Sigmoid colon (tissue), 7 donors: ENCODE measurements at regions of chr2 and their contacts with region 1.

Region 1: GRCh38 chr2:205680067-205680466 is 2.2 kb upstream of the NRP2 start:
- DNase-seq: peak; percentile 77
- H3K4me3 ChIP-seq: no peak overlapping the region
- H3K27ac ChIP-seq: peak overlapping the region in 3 of 4 donors; percentile 94 to 99 (median 96)
- H3K4me1 ChIP-seq: peaks cover 0 to 26% (median 23%) of the 10 kb centered on the region in 4 donors
- H3K27me3 ChIP-seq: no peaks in the 10 kb centered on the region
- CTCF ChIP-seq: peak; percentile 34 to 76 (median 56)
- EP300 ChIP-seq: no peak
- POLR2A ChIP-seq: no peak

Region 2: DNA sequence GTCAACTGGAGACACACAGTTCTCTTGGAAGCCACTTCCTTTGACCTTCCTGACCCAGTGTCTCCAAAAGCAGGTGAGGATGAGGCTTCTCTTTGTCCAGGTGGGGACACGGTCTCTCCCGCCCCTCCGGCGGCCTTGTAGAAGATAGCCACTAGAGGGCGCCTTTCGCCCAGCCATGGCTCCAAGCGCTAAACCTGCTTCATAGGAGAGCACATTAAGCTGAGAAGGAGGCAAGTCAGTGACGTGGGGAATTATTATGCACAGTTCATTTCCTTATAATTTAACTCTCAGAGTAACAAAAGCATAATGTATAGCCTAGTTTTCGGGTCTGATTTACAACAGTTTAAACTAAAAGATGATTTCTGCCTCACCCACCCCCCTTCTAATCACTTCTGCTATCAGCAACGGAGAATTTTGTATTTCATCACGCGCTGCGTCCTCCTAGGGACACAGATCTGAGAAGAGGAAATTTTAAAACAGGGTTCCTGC is 1534.8 kb before region 1 on chr2:
- intact Hi-C with region 1: loop called (anchors 2 kb)
- DNase-seq: peak; percentile 88
- H3K4me3 ChIP-seq: peak overlapping the region; percentile 18 to 41 (median 34)
- H3K27ac ChIP-seq: peak overlapping the region in 3 of 4 donors; percentile 20 to 35 (median 24)
- H3K4me1 ChIP-seq: no peaks in the 10 kb centered on the region
- H3K27me3 ChIP-seq: no peaks in the 10 kb centered on the region
- CTCF ChIP-seq: peak; percentile 77 to 95 (median 83)
- EP300 ChIP-seq: no peak
- POLR2A ChIP-seq: no peak

Region 3: GRCh38 chr2:204325468-204325867 is 1354.6 kb before region 1 on chr2:
- intact Hi-C with region 1: loop called (anchors 2 kb)
- DNase-seq: peak; percentile 87
- H3K4me3 ChIP-seq: no peak overlapping the region
- H3K27ac ChIP-seq: no peak overlapping the region
- H3K4me1 ChIP-seq: peaks cover 0 to 21% (median 0%) of the 10 kb centered on the region in 4 donors
- H3K27me3 ChIP-seq: no peaks in the 10 kb centered on the region
- CTCF ChIP-seq: peak; percentile 82 to 93 (median 88)
- EP300 ChIP-seq: no peak
- POLR2A ChIP-seq: no peak

Region 4: DNA sequence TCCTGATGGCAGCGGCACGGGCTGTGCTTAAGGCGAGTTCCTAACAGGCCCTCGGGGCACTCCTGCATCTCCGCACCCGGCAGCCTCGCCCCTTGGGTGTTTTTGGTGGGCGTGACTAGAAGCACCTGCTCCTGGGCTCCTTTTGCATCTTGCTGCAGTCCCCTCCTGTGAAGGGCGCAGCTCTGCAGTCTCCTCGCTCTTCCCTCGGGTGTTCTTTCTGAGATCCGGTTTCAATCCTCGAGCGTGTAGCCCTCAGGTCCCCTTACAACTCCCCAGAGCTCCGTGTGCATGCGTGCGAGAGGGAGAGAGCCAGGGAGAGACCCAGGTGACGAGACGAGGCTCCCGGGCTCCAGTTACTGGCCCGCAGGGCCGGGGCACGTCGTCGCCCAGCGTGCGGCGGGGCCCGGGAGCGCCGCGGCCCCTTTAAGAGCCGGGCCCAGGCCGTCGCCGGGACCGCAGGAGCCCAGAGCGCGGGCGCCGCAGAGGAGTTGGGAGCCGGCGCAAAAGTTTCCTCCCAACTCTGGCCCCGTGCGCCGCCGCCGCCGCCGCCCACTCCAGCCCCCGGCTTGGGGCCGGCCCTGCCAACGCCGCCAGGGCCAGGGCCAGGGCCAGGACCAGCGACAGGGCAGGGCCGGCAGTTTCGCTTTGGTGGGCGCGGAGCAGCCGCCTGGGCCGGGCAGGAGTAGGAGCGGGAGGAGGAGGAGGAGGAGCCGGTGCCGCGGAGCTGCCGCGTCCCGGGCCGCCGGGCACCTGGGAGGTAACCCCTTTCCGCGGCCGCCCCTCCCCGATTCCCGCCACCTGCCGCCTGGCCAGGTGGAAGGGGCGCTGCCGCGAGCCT is 1134.8 kb before region 1 on chr2 and contains the start of gene PARD3B:
- intact Hi-C with region 1: loop called (anchors 10 kb)
- DNase-seq: peak; percentile 78
- H3K4me3 ChIP-seq: peak within 1 kb of the TSS; percentile 93 to 99 (median 96)
- H3K27ac ChIP-seq: peak within 1 kb of the TSS; percentile 93 to 95 (median 94)
- H3K4me1 ChIP-seq: peaks cover 0 to 46% (median 33%) of the 10 kb centered on the region in 4 donors
- H3K27me3 ChIP-seq: no peaks in the 10 kb centered on the region
- CTCF ChIP-seq: no peak
- EP300 ChIP-seq: no peak
- POLR2A ChIP-seq: no peak
- total RNA-seq, gene PARD3B: 42.5 to 64.0 (median 52.7) TPM

Region 5: GRCh38 chr2:204860274-204860673 is 819.8 kb before region 1 on chr2:
- intact Hi-C with region 1: loop called (anchors 5 kb)
- DNase-seq: peak; percentile 80
- H3K4me3 ChIP-seq: no peak overlapping the region
- H3K27ac ChIP-seq: peak overlapping the region in 3 of 4 donors; percentile 35 to 69 (median 60)
- H3K4me1 ChIP-seq: peaks cover 0 to 34% (median 18%) of the 10 kb centered on the region in 4 donors
- H3K27me3 ChIP-seq: no peaks in the 10 kb centered on the region
- CTCF ChIP-seq: peak in 1 of 4 experiments; percentile 9
- EP300 ChIP-seq: no peak
- POLR2A ChIP-seq: no peak

Region 6: GRCh38 chr2:205885492-205886099 is 205.5 kb after region 1 on chr2:
- intact Hi-C with region 1: loop called (anchors 2 kb)
- DNase-seq: peak; percentile 95
- H3K4me3 ChIP-seq: no peak overlapping the region
- H3K27ac ChIP-seq: peak overlapping the region in 3 of 4 donors; percentile 70 to 80 (median 72)
- H3K4me1 ChIP-seq: peaks cover 0 to 34% (median 18%) of the 10 kb centered on the region in 4 donors
- H3K27me3 ChIP-seq: no peaks in the 10 kb centered on the region
- CTCF ChIP-seq: peak; percentile 91 to 98 (median 94)
- EP300 ChIP-seq: no peak
- POLR2A ChIP-seq: no peak

Region 7: GRCh38 chr2:205925373-205926337 is 245.6 kb after region 1 on chr2:
- intact Hi-C with region 1: loop called (anchors 5 kb)
- DNase-seq: peak; percentile 92
- H3K4me3 ChIP-seq: peak overlapping the region in 3 of 4 donors; percentile 26 to 41 (median 35)
- H3K27ac ChIP-seq: peak overlapping the region in 3 of 4 donors; percentile 53 to 69 (median 58)
- H3K4me1 ChIP-seq: peaks cover 0 to 18% (median 11%) of the 10 kb centered on the region in 4 donors
- H3K27me3 ChIP-seq: no peaks in the 10 kb centered on the region
- CTCF ChIP-seq: peak; percentile 89 to 96 (median 94)
- EP300 ChIP-seq: no peak
- POLR2A ChIP-seq: no peak